ENCODE measurements at regions of chr19 and their contacts with region 1.

Region 1: GRCh38 chr19:46975925-46976782 is 43.5 kb upstream of the NPAS1 start:
- DNase-seq: peak; percentile 98
- H3K4me3 ChIP-seq: peak overlapping the region in 1 of 4 donors; percentile 6
- H3K27ac ChIP-seq: peak overlapping the region; percentile 79 to 92 (median 84)
- H3K4me1 ChIP-seq: peaks cover 0 to 71% (median 51%) of the 10 kb centered on the region in 4 donors
- H3K27me3 ChIP-seq: no peaks in the 10 kb centered on the region
- CTCF ChIP-seq: no peak
- EP300 ChIP-seq: peak in 1 of 4 donors; percentile 50
- POLR2A ChIP-seq: no peak

Region 2: DNA sequence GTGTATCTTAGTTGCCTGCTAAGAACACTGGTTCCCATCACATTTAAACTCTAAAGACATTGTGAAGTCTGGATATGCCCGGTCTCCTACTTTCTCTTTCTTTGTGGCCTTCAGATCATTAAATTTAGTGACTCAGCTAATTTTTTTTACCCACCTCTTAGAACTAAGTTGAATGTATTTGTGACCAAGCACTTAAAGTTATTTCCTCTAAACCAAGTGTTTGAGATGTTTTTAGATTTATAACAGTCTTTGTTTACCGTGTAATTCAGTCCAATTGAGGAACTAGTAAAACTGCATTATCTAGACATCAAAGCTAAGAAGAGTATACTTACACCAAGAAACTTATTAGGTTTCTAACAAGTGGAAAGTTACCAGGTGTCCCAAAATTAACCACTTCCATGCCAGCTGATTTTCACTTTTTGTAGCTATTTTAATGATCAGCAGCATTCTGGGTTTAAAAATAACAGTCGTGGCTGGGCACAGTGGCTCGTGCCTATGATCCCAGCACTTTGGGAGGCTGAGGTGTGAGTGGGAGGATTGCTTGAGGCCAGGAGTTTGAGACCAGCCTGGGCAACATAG is 62.2 kb before region 1 on chr19:
- intact Hi-C with region 1: loop called (anchors 5 kb)
- DNase-seq: no peak
- H3K4me3 ChIP-seq: peak overlapping the region in 1 of 4 donors; percentile 3
- H3K27ac ChIP-seq: peak overlapping the region; percentile 18 to 75 (median 64)
- H3K4me1 ChIP-seq: peaks cover 0 to 66% (median 49%) of the 10 kb centered on the region in 4 donors
- H3K27me3 ChIP-seq: no peaks in the 10 kb centered on the region
- CTCF ChIP-seq: no peak
- EP300 ChIP-seq: no peak
- POLR2A ChIP-seq: no peak

Region 3: DNA sequence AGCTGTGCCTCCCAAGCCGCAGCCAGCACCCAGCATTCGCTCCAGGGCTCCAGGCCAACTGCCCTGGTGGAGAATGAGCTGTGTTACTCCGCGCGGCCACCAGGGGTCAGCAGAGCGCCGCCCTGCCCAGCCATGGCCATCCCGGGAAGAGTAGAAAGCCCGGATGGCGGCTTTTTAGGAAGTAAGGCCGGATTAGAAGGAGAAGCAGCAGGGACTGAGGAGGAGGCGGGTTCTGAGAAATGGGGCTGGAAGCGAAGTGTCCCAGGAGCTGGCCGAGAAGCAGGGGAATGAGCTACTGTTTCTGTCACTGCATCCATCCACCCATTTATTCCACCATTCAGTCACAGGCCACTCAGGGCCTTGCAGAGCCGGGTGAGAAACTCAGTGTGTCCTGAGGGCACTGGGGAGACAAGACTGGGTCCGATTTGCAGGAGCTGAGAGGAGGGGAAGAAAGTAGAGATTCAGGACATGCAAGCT is 36.9 kb after region 1 on chr19:
- intact Hi-C with region 1: no loop called
- DNase-seq: peak; percentile 89
- H3K4me3 ChIP-seq: no peak overlapping the region
- H3K27ac ChIP-seq: no peak overlapping the region
- H3K4me1 ChIP-seq: peaks cover 0 to 7% (median 0%) of the 10 kb centered on the region in 4 donors
- H3K27me3 ChIP-seq: peaks cover 0 to 10% (median 3%) of the 10 kb centered on the region in 3 donors
- CTCF ChIP-seq: peak; percentile 89 to 98 (median 94)
- EP300 ChIP-seq: no peak
- POLR2A ChIP-seq: no peak

Region 4: DNA sequence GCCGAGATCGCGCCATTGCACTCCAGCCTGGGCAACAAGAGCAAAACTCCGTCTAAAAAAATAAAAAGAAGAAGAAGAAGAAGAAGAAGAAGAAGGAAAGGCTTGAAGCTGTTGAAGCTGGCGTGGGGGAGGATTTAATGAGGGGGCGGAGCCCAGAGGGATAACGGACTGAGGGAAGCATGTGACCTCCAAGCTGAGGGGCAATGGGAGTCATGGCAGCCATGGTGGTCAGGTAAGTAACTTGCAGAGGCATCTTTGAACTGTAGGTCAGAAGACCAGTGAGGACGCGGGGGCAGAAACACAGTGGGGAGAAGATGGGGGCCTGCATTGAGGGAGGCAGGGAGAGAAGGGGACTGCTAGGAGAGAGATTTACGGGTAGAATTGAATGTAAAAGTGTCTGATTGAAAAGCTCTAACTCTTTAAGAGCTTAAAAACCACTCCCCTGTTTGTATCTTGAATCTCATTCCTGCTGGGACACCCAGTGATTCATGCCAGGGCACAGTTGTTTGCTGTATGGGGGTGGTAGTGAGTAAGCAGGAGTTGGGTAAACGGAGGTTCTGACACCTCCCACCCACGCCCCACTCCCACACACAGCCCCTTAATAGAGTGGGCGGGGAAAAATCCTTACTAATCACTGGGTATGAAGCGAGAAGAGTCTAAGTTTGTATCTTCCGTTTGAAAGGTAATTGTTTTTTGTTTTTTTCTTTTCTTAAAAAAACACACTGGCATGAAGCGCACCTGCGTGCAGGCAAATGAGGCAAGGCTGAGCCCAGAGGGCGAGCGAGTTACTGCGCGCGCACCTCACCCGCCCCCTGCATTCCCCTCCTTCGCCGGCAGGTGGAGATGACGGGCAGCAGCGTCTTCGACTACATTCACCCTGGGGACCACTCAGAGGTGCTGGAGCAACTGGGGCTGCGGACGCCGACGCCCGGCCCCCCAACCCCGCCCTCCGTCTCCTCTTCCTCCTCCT is 59.3 kb after region 1 on chr19:
- intact Hi-C with region 1: no loop called
- DNase-seq: peak; percentile 90
- H3K4me3 ChIP-seq: peak overlapping the region; percentile 21 to 51 (median 46)
- H3K27ac ChIP-seq: peak overlapping the region; percentile 47 to 73 (median 62)
- H3K4me1 ChIP-seq: peaks cover 0 to 15% (median 9%) of the 10 kb centered on the region in 4 donors
- H3K27me3 ChIP-seq: peaks cover 0 to 31% (median 19%) of the 10 kb centered on the region in 3 donors
- CTCF ChIP-seq: peak; percentile 81 to 100 (median 94)
- EP300 ChIP-seq: no peak
- POLR2A ChIP-seq: no peak

Region 5: GRCh38 chr19:47047763-47048405 is 71.7 kb after region 1 on chr19:
- intact Hi-C with region 1: no loop called
- DNase-seq: peak; percentile 93
- H3K4me3 ChIP-seq: peak overlapping the region; percentile 91 to 97 (median 96)
- H3K27ac ChIP-seq: peak overlapping the region; percentile 87 to 96 (median 91)
- H3K4me1 ChIP-seq: peaks cover 0 to 13% (median 3%) of the 10 kb centered on the region in 4 donors
- H3K27me3 ChIP-seq: no peaks in the 10 kb centered on the region
- CTCF ChIP-seq: no peak
- EP300 ChIP-seq: no peak
- POLR2A ChIP-seq: peak in 1 of 2 donors; percentile 10